ENCODE measurements at regions of chr17 and their contacts with region 1.

Region 1: DNA sequence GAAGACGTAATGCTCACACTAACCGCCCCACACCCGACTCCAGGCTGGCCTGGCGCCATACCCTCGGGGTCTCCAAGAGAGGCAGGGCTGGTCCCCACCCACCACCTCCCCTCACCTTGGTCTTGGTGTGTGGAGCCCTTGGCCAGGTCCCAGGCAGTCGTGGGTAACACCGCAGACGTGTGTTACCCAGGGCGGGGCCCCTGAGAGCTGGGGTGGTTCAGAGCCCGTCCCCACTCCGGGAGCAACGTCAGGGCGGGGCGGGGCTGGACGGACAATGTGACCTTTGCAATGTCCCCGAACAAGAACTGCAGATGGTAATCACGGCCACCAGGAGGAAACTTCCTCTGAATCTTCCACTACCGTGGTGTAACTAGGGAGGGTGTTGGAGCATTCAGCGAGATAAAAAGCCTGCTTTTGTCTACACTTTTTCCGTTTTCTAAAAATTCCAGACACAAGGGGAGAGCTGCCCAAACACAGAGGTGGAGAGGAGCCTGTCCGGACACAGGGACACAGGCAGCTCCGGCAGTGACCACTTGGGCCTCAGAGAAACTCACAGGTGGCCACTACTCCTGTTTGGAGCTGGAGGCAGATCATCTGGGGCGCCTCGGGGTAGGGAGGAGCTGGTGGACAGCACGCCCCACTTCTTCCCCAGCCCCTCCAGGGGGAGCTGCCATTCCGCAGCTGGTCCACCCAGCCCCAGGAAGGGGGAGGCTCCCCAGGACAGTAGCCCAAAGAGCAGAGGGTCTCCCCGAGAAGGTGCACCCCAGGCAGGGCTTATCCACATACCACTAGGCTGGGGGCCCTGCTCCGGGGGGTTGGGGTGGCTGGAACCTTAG is 14.2 kb upstream of the SLC38A10 start:
- DNase-seq: peak; percentile 64
- ATAC-seq: peak; percentile 79
- H3K4me3 Mint-ChIP-seq: peak overlapping the region; percentile 27
- H3K27ac Mint-ChIP-seq: peak overlapping the region; percentile 92
- H3K4me1 Mint-ChIP-seq: peaks cover 9% of the 10 kb centered on the region
- H3K27me3 Mint-ChIP-seq: no peaks in the 10 kb centered on the region; the same call in 1 of the 2 replicates
- CTCF ChIP-seq: peak; percentile 29; the same call in 1 of the 2 replicates

Region 2: DNA sequence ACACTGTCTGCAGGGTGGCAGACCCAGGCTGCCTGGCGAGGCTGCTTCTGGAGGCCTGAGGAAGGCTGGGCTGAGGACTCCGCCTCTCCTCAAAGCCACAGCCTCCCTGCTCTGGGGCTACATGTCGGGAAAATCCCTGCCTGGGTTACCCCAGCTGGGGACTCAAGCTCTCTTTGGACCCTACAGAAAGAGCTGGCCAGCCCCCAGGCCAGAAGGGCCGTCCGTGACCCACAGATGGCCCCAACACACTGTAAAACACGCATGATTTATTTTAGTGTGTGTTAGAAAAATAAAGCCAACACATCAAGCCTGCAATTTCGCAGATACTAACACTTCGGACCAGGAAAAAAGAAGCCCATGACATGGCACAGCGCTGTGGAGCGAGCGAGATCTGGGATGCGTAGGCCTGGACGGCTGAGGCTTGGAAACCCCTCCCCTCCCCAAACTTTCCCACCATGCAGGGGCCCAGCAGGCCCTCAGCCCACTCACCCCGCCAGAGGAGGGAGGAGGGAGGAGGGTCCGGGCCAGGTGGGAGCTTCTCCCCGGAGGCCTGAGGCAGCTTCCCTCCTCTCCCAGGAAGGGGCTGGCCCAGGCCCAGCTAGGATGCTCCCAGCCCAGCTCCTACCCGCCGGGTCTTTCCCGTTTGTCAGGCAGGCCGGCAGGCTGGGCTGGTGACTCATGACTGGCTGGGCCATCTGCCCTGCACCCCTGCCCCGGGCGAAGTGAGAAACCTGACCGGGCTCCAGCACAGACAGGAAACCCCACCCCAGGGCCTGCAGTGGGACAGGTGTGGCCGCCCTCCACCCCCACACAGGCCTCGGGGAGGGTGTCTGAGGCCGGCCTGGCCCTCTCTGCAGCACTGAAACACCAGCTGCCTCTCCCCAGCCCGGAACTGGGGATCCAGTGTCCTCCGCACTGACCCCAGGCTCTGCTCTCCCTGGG is 20.0 kb after region 1 on chr17:
- CTCF ChIA-PET with region 1: interaction called, 16 read pairs
- POLR2A ChIA-PET with region 1: no interaction called
- DNase-seq: peak; percentile 69
- ATAC-seq: peak; percentile 72
- H3K4me3 Mint-ChIP-seq: no peak overlapping the region
- H3K27ac Mint-ChIP-seq: peak overlapping the region; percentile 79; the same call in 1 of the 2 replicates
- H3K4me1 Mint-ChIP-seq: peaks cover 19% of the 10 kb centered on the region
- H3K27me3 Mint-ChIP-seq: no peaks in the 10 kb centered on the region; the same call in 1 of the 2 replicates
- CTCF ChIP-seq: no peak

Region 3: DNA sequence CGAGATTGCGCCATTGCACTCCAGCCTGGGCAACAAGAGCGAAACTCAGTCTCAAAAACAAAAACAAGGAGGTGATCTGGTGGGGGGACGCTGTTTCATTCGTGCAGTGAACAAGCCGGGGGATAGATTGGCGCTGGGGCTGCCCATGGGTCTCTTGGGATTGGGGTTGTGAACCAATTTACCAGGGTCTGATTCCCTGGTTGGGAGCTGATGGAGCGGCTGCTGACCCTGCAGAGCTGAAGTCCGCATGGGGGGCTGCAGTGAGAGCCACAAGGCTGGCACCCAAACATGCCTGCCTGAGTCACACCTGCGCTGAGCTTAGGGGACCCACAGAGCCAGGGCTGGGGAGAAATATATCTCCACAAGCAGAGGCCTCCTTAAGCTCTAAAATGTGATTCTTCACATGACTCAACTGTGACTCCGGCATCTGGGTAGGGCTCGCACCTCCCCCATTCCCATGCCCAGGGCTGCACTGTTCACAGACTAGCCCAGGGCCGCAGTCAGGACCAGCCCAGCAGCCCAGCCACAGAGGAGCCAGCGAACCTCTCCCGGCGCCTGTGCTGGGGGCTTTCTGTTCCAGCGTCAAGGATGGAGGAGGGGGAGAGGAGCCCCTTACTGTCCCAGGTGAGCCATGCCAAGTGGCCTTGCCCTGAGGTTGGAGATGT is 332.7 kb after region 1 on chr17:
- CTCF ChIA-PET with region 1: no interaction called
- POLR2A ChIA-PET with region 1: no interaction called
- DNase-seq: no peak
- ATAC-seq: peak; percentile 28; the same call in 1 of the 2 replicates
- H3K4me3 Mint-ChIP-seq: no peak overlapping the region
- H3K27ac Mint-ChIP-seq: peak overlapping the region; percentile 18; the same call in 1 of the 2 replicates
- H3K4me1 Mint-ChIP-seq: no peaks in the 10 kb centered on the region
- H3K27me3 Mint-ChIP-seq: peaks cover 7% of the 10 kb centered on the region
- CTCF ChIP-seq: no peak